ENCODE measurements at regions of chr7 and their contacts with region 1.

Region 1: GRCh38 chr7:144866189-144866588 is 30.3 kb upstream of the TPK1 start:
- DNase-seq: no peak
- ATAC-seq: no peak
- H3K4me3 ChIP-seq: no peak overlapping the region
- H3K4me3 Mint-ChIP-seq: no peak overlapping the region
- H3K27ac ChIP-seq: no peak overlapping the region
- H3K27ac Mint-ChIP-seq: no peak overlapping the region
- H3K4me1 ChIP-seq: no peaks in the 10 kb centered on the region
- H3K4me1 Mint-ChIP-seq: no peaks in the 10 kb centered on the region
- H3K27me3 ChIP-seq: no peaks in the 10 kb centered on the region
- H3K27me3 Mint-ChIP-seq: peaks cover 0 to 18% (median 0%) of the 10 kb centered on the region in 5 donors

Region 2: GRCh38 chr7:144588559-144589051 is 277.6 kb before region 1 on chr7:
- CTCF ChIA-PET with region 1: no interaction called
- POLR2A ChIA-PET with region 1: no interaction called
- intact Hi-C with region 1: no loop called
- DNase-seq: no peak
- ATAC-seq: no peak
- H3K4me3 ChIP-seq: no peak overlapping the region
- H3K4me3 Mint-ChIP-seq: no peak overlapping the region
- H3K27ac ChIP-seq: no peak overlapping the region
- H3K27ac Mint-ChIP-seq: no peak overlapping the region
- H3K4me1 ChIP-seq: no peaks in the 10 kb centered on the region
- H3K4me1 Mint-ChIP-seq: peaks cover 0 to 5% (median 0%) of the 10 kb centered on the region in 7 donors
- H3K27me3 ChIP-seq: no peaks in the 10 kb centered on the region
- H3K27me3 Mint-ChIP-seq: no peaks in the 10 kb centered on the region

Region 3: GRCh38 chr7:144842377-144842851 is 23.8 kb before region 1 on chr7:
- CTCF ChIA-PET with region 1: no interaction called
- POLR2A ChIA-PET with region 1: no interaction called
- intact Hi-C with region 1: loop called in 1 of 2 experiments (anchors 2 kb)
- DNase-seq: no peak
- ATAC-seq: peak; percentile 82
- H3K4me3 ChIP-seq: no peak overlapping the region
- H3K4me3 Mint-ChIP-seq: peak overlapping the region in 1 of 10 donors; percentile 59
- H3K27ac ChIP-seq: no peak overlapping the region
- H3K27ac Mint-ChIP-seq: peak overlapping the region in 1 of 9 donors; percentile 85
- H3K4me1 ChIP-seq: no peaks in the 10 kb centered on the region
- H3K4me1 Mint-ChIP-seq: peaks cover 7 to 19% (median 12%) of the 10 kb centered on the region in 7 donors
- H3K27me3 ChIP-seq: peaks cover 0 to 2% of the 10 kb centered on the region in 2 donors
- H3K27me3 Mint-ChIP-seq: no peaks in the 10 kb centered on the region

Region 4: DNA sequence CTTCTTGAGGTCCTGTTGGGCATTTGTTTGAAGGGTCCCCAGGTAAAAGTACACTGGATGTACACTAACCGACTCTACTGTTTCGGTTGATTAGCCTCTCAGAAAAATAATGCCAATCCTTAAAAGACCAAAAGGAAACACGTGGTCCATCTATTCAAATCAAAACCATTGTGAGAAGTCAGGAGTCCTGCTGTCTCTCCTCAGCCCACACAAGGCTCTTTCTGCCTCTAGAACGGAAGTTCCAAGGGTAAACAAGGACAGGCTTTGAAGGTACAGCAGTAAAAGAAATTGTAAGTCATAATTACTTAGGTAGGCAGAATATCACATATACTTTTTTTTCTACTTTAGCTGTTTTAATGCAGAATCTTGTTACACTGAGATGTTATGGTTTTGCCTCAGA is 41.4 kb after region 1 on chr7:
- CTCF ChIA-PET with region 1: no interaction called
- POLR2A ChIA-PET with region 1: no interaction called
- intact Hi-C with region 1: loop called in 1 of 2 experiments (anchors 1 kb)
- DNase-seq: no peak
- ATAC-seq: no peak
- H3K4me3 ChIP-seq: no peak overlapping the region
- H3K4me3 Mint-ChIP-seq: no peak overlapping the region
- H3K27ac ChIP-seq: no peak overlapping the region
- H3K27ac Mint-ChIP-seq: no peak overlapping the region
- H3K4me1 ChIP-seq: no peaks in the 10 kb centered on the region
- H3K4me1 Mint-ChIP-seq: peaks cover 0 to 24% (median 11%) of the 10 kb centered on the region in 7 donors
- H3K27me3 ChIP-seq: no peaks in the 10 kb centered on the region
- H3K27me3 Mint-ChIP-seq: peaks cover 0 to 4% (median 0%) of the 10 kb centered on the region in 5 donors